Posterior vena cava (tissue), 2 donors: ENCODE measurements at regions of chr13 and their contacts with region 1.

Region 1: DNA sequence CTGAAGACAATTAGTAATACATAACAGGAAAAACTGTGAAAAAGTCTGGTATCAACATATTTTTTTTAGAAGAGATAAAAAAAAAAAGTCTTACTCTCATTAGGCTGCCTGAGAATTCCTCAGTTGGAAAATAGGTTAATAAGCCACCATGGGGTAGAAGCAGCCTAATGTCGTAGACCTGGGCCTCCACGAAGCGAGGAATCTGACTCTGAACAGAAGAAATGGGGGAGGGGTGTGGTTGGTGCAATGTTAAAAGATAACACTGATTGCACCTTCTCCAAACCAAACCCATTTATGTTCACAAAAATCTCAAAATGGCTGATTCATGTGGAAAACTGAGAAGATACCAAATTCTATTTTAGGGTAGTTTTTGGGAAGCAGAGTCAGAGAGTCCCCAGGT is 62.4 kb downstream of the MPHOSPH8 start:
- DNase-seq: no peak

Region 2: DNA sequence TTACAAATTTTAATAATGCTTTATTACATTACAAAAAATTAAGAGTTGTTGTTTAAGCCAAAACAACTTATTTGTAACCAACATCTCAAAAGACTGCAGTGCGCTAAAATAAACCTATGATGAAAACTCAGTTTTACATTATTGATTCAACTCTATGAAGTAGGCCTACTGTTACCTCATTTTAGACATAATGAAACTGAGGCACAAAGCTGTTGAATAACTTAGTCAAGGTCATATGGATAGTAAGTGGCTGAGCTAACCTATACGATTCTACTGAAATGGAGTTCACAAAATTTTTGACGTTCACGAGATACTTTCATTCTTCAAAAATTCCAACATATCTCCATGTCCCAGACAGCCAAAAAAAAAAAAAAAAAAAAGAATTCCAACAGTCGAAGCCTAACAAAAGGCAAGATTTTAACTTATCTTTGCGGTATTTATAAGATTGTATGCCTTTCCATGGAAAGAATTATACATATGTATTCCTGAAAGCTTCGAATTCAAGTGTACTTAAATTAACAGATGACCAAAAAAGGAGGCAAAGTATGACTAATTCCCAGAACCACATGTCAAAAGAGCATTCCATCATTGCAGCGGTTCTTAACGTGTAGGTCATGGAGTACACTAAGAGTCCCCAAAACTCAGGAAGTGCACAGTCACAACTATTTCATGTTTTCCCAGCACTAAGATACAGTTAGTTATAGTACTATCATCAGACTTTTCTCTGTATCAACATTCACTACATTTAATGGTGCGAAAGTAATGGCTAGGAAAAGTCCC is 17.5 kb after region 1 on chr13:
- intact Hi-C with region 1: loop called in 1 of 2 experiments (anchors 1 kb)
- DNase-seq: no peak

Region 3: DNA sequence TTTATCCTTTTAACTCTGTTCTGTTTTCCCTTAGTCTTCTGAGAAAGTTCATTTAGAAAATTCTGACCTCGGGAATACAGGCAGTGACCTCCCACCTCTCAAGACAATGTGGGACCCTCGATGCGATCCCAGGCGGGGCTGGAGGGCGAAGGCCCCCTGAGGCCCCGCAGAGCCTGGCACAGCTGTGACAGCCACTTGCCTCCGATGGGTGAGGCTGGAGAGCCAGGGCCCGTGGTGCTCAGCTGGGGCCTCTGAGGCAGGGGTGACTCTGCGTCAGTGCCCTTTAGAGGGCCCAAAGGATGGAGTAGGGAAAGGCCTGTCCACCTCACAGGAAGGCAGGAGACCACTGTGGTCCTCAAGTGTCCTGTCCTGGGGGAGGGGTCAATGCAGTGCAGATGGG is 454.7 kb after region 1 on chr13:
- intact Hi-C with region 1: no loop called
- DNase-seq: no peak